Ovary (tissue), 10 donors: ENCODE measurements at regions of chr12 and their contacts with region 1.

Region 1: DNA sequence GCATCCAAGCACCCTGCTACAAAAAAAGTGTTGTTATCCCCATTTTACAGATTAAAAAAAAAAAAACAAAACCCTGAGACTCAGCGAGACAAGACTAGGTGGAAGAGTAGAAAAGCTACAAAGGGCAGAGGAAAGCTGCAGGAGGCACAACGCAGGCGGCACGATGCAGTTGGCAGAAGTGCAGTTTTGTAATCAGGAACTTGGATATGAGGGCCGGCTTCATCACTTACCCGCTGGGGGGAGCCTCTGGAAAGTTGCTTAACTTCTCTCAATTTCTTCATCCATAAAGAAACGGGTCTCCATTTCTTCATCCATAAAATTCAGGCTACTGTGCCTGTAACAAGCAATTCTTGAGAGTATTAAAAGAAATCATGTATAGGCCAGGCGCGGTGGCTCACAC is 33.1 kb upstream of the CCDC60 start:
- DNase-seq: no peak
- H3K4me3 ChIP-seq: no peak overlapping the region
- H3K27ac ChIP-seq: no peak overlapping the region
- H3K4me1 ChIP-seq: no peaks in the 10 kb centered on the region
- H3K27me3 ChIP-seq: no peaks in the 10 kb centered on the region
- CTCF ChIP-seq: no peak
- EP300 ChIP-seq: no peak
- POLR2A ChIP-seq: no peak

Region 2: DNA sequence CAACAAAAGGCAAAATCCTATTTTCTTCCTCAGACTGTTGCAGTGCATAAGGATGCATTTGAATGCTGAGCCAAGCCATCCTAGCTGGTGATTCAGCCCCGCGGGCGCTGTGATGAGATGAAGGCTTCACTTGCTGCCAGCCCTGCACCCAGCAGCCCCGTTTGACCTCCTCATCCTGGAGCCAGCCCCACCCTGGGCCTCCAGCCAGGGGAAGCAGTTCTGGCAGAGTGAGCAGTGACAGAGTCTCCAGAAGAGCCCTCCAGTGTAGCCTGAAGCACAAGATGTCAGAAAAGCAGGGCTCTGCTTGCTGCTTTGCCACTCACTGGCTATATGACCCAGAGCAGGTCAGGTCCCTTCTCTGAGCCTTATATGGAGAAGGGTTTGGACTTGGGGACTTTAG is 218.9 kb before region 1 on chr12:
- intact Hi-C with region 1: no loop called
- DNase-seq: no peak
- H3K4me3 ChIP-seq: no peak overlapping the region
- H3K27ac ChIP-seq: no peak overlapping the region
- H3K4me1 ChIP-seq: no peaks in the 10 kb centered on the region
- H3K27me3 ChIP-seq: no peaks in the 10 kb centered on the region
- CTCF ChIP-seq: no peak
- EP300 ChIP-seq: no peak
- POLR2A ChIP-seq: no peak

Region 3: DNA sequence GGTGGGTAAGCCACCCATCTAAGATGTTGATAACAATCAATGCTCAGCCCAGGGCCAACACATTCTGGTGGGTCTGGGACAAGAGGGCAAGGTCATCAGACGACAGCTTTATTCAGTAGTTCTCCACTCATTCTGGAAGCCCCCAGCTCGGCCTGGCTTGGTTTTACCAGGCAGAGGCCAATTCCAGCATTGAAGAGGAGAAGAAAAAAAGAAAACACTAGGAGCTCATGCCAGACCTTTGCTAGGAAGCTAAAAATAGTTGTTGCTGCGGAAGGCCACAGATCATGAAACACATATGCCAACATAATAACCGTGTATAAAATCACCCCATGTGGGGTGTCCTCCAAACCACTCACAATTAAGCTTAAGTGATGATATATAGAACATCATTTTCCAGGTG is 77.5 kb after region 1 on chr12:
- intact Hi-C with region 1: loop called in 1 of 4 experiments (anchors 2 kb)
- DNase-seq: no peak
- H3K4me3 ChIP-seq: no peak overlapping the region
- H3K27ac ChIP-seq: no peak overlapping the region
- H3K4me1 ChIP-seq: no peaks in the 10 kb centered on the region
- H3K27me3 ChIP-seq: no peaks in the 10 kb centered on the region
- CTCF ChIP-seq: no peak
- EP300 ChIP-seq: no peak
- POLR2A ChIP-seq: no peak